Adrenal gland (tissue), 19 donors: ENCODE measurements at regions of chr5 and their contacts with region 1.

Region 1: DNA sequence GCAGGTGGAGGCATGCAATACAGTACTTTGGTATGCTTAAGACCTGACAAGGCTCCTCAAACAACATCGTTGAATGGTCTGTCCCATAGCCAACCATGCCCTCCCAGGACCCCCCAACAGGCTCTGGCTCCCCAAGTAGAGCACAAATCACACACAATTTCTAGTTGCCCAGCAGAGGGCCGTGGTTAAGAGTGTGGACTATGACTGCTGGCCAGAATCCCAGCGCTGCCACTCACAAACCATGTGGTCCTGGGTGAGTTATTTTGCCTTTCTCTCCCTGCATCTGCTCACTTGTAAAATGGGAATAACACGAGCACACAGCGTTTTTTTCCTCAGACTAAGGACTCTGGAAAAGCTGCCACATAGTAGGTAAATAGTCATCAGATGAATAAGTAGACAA is 6.5 kb downstream of the CKMT2 start:
- DNase-seq: peak in 4 of 7 donors; percentile 35 to 68 (median 60)
- H3K4me3 ChIP-seq: no peak overlapping the region
- H3K27ac ChIP-seq: peak overlapping the region in 1 of 5 donors; percentile 36
- H3K4me1 ChIP-seq: peaks cover 13 to 34% of the 10 kb centered on the region in 2 donors
- H3K27me3 ChIP-seq: no peaks in the 10 kb centered on the region
- CTCF ChIP-seq: peak in 3 of 6 experiments; percentile 3 to 22 (median 8)
- POLR2A ChIP-seq: peak in 1 of 2 donors; percentile 14

Region 2: DNA sequence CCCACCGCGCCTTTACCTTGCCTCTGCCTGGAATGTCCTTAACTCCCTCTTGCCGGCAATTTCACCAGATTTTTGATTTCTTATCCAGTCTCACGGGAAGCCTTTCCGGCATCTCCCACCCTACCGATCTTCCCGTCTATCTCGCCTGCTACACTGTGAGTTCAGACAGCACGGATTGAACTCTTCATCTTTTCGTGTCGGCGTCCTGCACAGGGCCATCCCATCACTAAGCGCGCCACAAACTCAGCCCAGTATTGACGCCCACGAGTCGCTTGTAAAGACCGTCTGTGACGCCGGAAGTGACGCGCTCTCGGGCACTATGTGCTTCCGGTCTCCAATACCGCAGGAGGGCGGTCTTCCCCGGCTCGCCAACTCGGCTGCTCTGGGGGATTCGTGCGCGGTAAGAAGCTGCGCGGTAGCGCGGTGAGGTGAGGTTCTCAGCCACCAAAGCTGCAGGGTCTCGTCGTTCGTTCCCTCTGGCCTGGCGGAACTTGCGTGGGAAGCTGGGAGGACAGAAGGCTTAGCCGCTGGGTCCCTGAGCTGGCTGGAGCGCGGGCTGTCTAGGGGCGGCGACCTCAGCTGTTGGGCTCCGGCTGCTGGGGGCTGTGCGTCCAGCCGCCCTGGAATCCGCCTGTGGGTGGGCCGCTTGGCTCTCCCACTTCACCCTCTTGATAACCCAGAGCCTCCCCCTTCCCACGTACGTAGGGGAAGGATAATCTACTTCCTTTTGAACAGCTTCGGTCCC is 61.8 kb after region 1 on chr5 and contains the start of gene ZCCHC9:
- intact Hi-C with region 1: loop called in 1 of 2 experiments (anchors 2 kb)
- DNase-seq: peak; percentile 90 to 97 (median 94)
- H3K4me3 ChIP-seq: peak within 1 kb of the TSS; percentile 62 to 100 (median 72)
- H3K27ac ChIP-seq: peak within 1 kb of the TSS; percentile 68 to 92 (median 81)
- H3K4me1 ChIP-seq: peaks cover 12 to 36% of the 10 kb centered on the region in 2 donors
- H3K27me3 ChIP-seq: no peaks in the 10 kb centered on the region
- CTCF ChIP-seq: peak in 3 of 6 experiments; percentile 4 to 33 (median 10)
- POLR2A ChIP-seq: peak; percentile 75 to 88
- total RNA-seq, gene ZCCHC9: 10.0 to 35.5 (median 18.5) TPM